ENCODE measurements at regions of chr17 and their contacts with region 1.

Region 1: DNA sequence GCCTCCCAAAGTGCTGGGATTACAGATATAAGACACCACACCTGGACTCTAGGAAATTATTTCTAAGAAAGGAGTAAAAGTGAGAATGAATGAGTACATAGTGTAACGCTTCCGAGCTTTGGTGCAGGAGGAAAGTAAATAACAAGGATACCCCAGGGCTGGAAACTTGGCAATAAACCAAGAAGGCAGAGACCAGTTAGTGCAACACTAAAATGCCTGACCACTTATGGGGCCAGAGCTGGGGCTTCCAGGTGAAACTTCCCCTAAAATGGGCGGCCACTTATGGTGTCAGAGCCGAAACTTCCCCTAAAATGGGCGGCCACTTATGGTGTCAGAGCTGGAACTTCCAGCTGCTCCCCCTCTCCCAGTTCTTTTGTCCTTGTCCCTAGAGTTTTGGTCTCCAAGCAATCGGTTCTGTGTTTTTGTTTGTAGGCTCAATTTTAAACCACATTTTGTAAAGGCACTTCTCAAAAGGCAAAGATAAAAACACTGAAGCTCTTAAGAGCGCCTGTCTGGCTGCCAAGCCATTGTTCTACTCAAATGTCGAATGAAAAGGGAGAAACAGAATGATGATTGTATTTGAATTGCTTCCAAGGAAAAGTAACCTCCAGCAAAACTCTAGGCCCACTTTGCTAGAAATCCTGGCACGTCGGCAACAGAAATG is 63.9 kb downstream of the NXN start:
- DNase-seq: no peak
- ATAC-seq: no peak
- H3K4me3 ChIP-seq: no peak overlapping the region
- H3K27ac ChIP-seq: peak overlapping the region; percentile 80
- H3K4me1 ChIP-seq: peaks cover 58% of the 10 kb centered on the region
- H3K27me3 ChIP-seq: no peaks in the 10 kb centered on the region
- CTCF ChIP-seq: no peak

Region 2: DNA sequence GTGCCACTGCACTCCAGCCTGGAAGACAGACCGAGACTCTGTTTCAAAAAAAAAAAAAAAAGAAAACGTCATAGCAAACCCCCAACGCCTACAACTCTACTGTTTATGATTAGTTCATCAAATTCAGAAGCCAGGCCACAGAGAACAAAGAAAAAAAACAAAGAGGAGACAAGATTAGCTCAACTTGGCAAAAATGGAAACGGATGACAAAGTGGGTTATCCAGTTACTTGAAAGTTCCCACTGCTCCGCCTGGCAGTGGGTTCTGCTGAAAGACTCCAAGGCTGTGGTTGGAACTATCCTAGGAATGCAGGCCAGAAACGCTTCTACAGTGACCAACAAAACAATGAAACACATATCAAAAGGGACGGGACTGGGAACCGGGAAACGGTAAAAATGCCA is 80.4 kb before region 1 on chr17:
- CTCF ChIA-PET with region 1: no interaction called
- POLR2A ChIA-PET with region 1: no interaction called
- in situ Hi-C with region 1: no loop called
- intact Hi-C with region 1: no loop called
- DNase-seq: no peak
- ATAC-seq: peak; percentile 57
- H3K4me3 ChIP-seq: no peak overlapping the region
- H3K27ac ChIP-seq: no peak overlapping the region
- H3K4me1 ChIP-seq: peaks cover 4% of the 10 kb centered on the region
- H3K27me3 ChIP-seq: no peaks in the 10 kb centered on the region
- CTCF ChIP-seq: no peak

Region 3: GRCh38 chr17:901191-901950 is 14.3 kb before region 1 on chr17:
- CTCF ChIA-PET with region 1: no interaction called
- POLR2A ChIA-PET with region 1: interaction called, 14 read pairs
- in situ Hi-C with region 1: no loop called
- intact Hi-C with region 1: no loop called
- DNase-seq: no peak
- ATAC-seq: 0 out of 2 replicates have a peak, but pooled peaks have one; percentile 25
- H3K4me3 ChIP-seq: no peak overlapping the region
- H3K27ac ChIP-seq: 0 out of 2 replicates have a peak overlapping the region, but pooled peaks have one; percentile 39
- H3K4me1 ChIP-seq: peaks cover 31% of the 10 kb centered on the region
- H3K27me3 ChIP-seq: no peaks in the 10 kb centered on the region
- CTCF ChIP-seq: no peak